AG04450 (cell line): ENCODE measurements at regions of chrX and their contacts with region 1.

Region 1: GRCh38 chrX:153438531-153438930 is 7.3 kb downstream of the TREX2 start:
- DNase-seq: no peak
- H3K4me3 ChIP-seq: no peak overlapping the region
- H3K27ac ChIP-seq: no peak overlapping the region
- H3K27me3 ChIP-seq: no peaks in the 10 kb centered on the region
- CTCF ChIP-seq: peak; percentile 46

Region 2: GRCh38 chrX:153032397-153033118 is 406.0 kb before region 1 on chrX:
- CTCF ChIA-PET with region 1: interaction called, 13 read pairs
- POLR2A ChIA-PET with region 1: no interaction called
- DNase-seq: no peak
- H3K4me3 ChIP-seq: peak overlapping the region; percentile 13; the same call in 1 of the 2 replicates
- H3K27ac ChIP-seq: no peak overlapping the region
- H3K27me3 ChIP-seq: no peaks in the 10 kb centered on the region
- CTCF ChIP-seq: peak; percentile 66